PC-3 (cell line): ENCODE measurements at regions of chr14 and their contacts with region 1.

Region 1: GRCh38 chr14:24135834-24136542 is at the start of gene PSME1:
- DNase-seq: peak; percentile 90
- ATAC-seq: peak; percentile 86
- H3K4me3 ChIP-seq: peak within 1 kb of the TSS; percentile 95
- H3K27ac ChIP-seq: no peak within 1 kb of the TSS
- H3K4me1 ChIP-seq: peaks cover 23% of the 10 kb centered on the region
- H3K27me3 ChIP-seq: no peaks in the 10 kb centered on the region
- CTCF ChIP-seq: no peak
- total RNA-seq, gene PSME1: 140 and 163 TPM in 2 replicates

Region 2: DNA sequence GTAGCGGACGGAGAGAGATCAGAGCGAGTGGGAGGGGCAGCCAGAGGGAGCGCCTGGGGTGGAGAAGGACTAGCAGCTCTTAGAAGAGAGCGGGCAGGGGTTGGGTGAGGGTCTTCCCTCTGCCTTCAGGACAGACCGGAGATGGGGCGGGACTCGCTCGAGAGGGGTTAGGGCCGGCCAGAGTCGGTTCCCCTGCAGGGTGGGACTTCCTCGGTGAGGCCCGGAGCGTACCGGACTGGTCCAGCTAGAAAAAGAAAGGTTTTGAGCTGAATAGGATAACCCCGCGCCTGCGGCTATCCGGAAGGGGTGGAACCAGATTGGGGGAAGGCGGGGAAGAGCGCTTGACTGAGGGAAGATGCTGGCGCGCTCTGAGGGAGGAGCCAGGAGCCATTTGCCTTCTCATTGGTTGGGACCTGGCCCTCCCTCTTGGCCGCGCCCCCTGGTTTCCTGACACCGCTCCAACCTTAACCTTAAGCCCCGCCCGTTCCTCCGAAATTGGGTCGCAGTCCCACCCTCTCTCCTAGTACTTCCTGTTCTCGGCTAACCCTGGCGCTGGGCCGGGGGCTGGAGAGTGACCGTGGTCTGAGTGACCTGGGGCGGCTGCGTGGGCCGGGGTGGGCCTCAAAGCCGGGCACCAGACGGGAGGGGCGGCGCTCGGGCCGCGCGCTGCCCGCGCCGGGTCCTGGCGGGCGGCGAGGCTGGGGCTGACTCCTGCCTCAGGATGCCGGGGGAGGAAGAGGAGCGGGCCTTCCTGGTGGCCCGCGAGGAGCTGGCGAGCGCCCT is 11.2 kb after region 1 on chr14 and contains the start of gene RNF31:
- CTCF ChIA-PET with region 1: no interaction called
- POLR2A ChIA-PET with region 1: interaction called, 14 read pairs
- intact Hi-C with region 1: no loop called
- DNase-seq: peak; percentile 98
- ATAC-seq: peak; percentile 86
- H3K4me3 ChIP-seq: peak within 1 kb of the TSS; percentile 86
- H3K27ac ChIP-seq: peak within 1 kb of the TSS; percentile 48
- H3K4me1 ChIP-seq: peaks cover 18% of the 10 kb centered on the region
- H3K27me3 ChIP-seq: no peaks in the 10 kb centered on the region
- CTCF ChIP-seq: no peak
- total RNA-seq, gene RNF31: 69.6 and 79.4 TPM in 2 replicates